ENCODE measurements at regions of chr3 and their contacts with region 1.

Region 1: DNA sequence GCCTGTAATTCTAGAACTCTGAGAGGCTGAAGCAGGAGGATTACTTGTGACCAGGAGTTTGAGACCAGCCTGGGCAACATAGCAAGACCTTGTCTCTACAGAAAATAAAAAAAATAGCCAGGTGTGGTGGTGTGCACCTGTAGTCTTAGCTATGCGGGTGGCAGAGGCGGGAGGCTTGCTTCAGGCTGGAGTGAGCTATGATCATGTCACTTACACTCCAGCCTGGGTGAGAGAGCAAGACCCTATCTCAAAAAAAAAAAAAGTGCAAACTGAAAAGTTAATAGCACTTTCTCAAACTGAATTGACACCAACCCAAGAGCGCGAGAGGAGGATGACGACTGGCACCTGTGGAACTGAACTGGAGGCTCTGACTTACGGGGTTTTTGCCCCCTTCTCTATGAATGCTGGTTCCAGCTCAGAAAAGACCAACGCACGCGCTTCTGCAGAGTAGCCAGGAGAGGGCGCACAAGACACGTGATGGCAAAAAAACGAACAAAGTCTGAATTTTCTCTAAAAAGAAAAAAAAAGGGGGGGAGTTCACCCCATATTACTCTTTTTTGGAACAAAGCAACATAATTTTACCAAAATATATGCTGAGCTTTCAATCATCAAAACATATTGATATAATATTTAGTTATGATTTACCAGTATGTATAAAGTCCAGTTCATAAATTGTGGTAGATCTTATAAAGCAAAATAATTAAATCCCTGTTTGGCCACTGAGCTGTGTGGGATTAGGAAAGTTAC is 23.7 kb downstream of the CFAP92 start:
- DNase-seq: peak in 1 of 2 experiments; percentile 78
- H3K4me3 ChIP-seq: no peak overlapping the region
- H3K27ac ChIP-seq: no peak overlapping the region
- H3K4me1 ChIP-seq: no peaks in the 10 kb centered on the region
- H3K27me3 ChIP-seq: no peaks in the 10 kb centered on the region; a peak in 1 of 7 replicates
- CTCF ChIP-seq: peak; percentile 75 to 84 (median 81)
- EP300 ChIP-seq: no peak
- POLR2A ChIP-seq: no peak
- RAD21 ChIP-seq: peak; percentile 92 to 95

Region 2: GRCh38 chr3:128655531-128655930 is 314.6 kb before region 1 on chr3:
- CTCF ChIA-PET with region 1: no interaction called
- POLR2A ChIA-PET with region 1: no interaction called
- DNase-seq: no peak
- H3K4me3 ChIP-seq: no peak overlapping the region
- H3K27ac ChIP-seq: no peak overlapping the region
- H3K4me1 ChIP-seq: no peaks in the 10 kb centered on the region
- H3K27me3 ChIP-seq: no peaks in the 10 kb centered on the region
- CTCF ChIP-seq: no peak
- EP300 ChIP-seq: no peak
- POLR2A ChIP-seq: no peak
- RAD21 ChIP-seq: no peak

Region 3: GRCh38 chr3:128845778-128846485 is 124.2 kb before region 1 on chr3:
- CTCF ChIA-PET with region 1: no interaction called
- POLR2A ChIA-PET with region 1: no interaction called
- DNase-seq: peak; percentile 60 to 97
- H3K4me3 ChIP-seq: peak overlapping the region in 3 of 4 experiments; percentile 22 to 49 (median 36); a peak in 5 of 8 replicates
- H3K27ac ChIP-seq: no peak overlapping the region
- H3K4me1 ChIP-seq: peaks cover 0 to 11% (median 9%) of the 10 kb centered on the region in 4 experiments; a peak in 4 of 7 replicates
- H3K27me3 ChIP-seq: no peaks in the 10 kb centered on the region
- CTCF ChIP-seq: peak in 2 of 3 experiments; percentile 85 to 88; a peak in 3 of 4 replicates
- EP300 ChIP-seq: 0 out of 3 replicates have a peak, but pooled peaks of 1 of the 2 experiments have one; percentile 34
- POLR2A ChIP-seq: no peak
- RAD21 ChIP-seq: peak; percentile 49 to 59

Region 4: GRCh38 chr3:128950223-128950938 is 19.8 kb before region 1 on chr3:
- CTCF ChIA-PET with region 1: interaction called, 11 read pairs
- POLR2A ChIA-PET with region 1: no interaction called
- DNase-seq: peak in 1 of 2 experiments; percentile 27
- H3K4me3 ChIP-seq: no peak overlapping the region
- H3K27ac ChIP-seq: no peak overlapping the region
- H3K4me1 ChIP-seq: no peaks in the 10 kb centered on the region
- H3K27me3 ChIP-seq: no peaks in the 10 kb centered on the region
- CTCF ChIP-seq: peak in 2 of 3 experiments; percentile 23 to 28; a peak in 2 of 4 replicates
- EP300 ChIP-seq: no peak
- POLR2A ChIP-seq: no peak
- RAD21 ChIP-seq: peak; percentile 38 to 54

Region 5: DNA sequence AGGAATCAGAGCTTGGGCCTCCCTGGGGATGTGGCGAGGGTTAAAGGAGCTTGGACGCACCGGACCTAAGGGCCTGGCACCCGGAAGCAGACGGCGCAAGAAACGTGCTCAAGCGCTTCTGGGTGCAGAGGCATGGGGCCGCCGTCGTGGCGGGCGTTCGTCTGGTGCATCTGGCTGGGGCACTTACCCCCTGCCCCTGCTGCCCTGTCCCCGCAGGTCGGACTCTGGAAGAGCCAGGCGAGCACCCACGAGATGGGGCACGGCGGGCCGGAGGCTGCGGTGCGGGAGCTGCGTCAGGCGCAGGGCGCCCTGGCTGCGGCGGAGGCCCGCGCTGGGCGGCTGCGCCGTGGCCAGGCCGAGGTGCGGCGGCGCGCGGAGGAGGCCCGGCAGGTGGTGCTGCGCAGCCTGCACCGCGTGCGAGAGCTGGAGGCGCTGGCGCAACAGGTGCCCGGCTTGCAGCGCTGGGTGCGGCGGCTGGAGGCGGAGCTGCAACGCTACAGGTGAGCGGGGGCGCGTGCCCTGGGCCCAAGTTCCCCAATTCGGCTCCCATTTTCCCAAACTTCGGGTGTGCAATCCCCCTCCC is 33.5 kb after region 1 on chr3:
- CTCF ChIA-PET with region 1: interaction called, 40 read pairs
- POLR2A ChIA-PET with region 1: no interaction called
- DNase-seq: no peak
- H3K4me3 ChIP-seq: peak overlapping the region in 3 of 4 experiments; percentile 4 to 50 (median 24); a peak in 6 of 8 replicates
- H3K27ac ChIP-seq: no peak overlapping the region
- H3K4me1 ChIP-seq: peaks cover 4 to 19% (median 13%) of the 10 kb centered on the region in 4 experiments
- H3K27me3 ChIP-seq: peaks cover 52 to 70% (median 58%) of the 10 kb centered on the region in 4 experiments
- CTCF ChIP-seq: peak in 2 of 3 experiments; percentile 25 to 38; a peak in 3 of 4 replicates
- EP300 ChIP-seq: no peak
- POLR2A ChIP-seq: no peak
- RAD21 ChIP-seq: no peak; a peak in 1 of 4 replicates

Region 6: DNA sequence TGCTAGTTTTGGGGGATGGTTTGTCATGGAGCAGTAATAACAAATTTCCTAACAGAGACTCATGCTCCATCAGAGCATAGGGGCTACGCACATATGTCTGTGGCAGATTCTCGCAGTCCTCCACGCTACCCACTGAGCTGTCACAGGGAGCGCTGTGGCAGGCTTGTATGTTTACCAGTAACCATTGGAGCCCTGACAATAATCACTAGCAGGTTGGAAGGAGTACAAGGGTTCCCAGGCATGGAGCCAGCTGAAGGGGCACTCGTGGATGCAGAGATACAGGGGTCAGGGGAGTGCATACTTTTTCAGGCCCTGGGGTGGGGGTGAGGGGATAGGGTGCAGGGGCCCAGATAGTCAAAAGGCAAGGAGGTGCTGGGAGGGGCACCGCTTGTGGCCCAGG is 82.5 kb after region 1 on chr3:
- CTCF ChIA-PET with region 1: interaction called, 79 read pairs
- POLR2A ChIA-PET with region 1: no interaction called
- DNase-seq: no peak
- H3K4me3 ChIP-seq: no peak overlapping the region
- H3K27ac ChIP-seq: no peak overlapping the region
- H3K4me1 ChIP-seq: no peaks in the 10 kb centered on the region
- H3K27me3 ChIP-seq: no peaks in the 10 kb centered on the region
- CTCF ChIP-seq: no peak
- EP300 ChIP-seq: no peak
- POLR2A ChIP-seq: no peak
- RAD21 ChIP-seq: no peak

Region 7: DNA sequence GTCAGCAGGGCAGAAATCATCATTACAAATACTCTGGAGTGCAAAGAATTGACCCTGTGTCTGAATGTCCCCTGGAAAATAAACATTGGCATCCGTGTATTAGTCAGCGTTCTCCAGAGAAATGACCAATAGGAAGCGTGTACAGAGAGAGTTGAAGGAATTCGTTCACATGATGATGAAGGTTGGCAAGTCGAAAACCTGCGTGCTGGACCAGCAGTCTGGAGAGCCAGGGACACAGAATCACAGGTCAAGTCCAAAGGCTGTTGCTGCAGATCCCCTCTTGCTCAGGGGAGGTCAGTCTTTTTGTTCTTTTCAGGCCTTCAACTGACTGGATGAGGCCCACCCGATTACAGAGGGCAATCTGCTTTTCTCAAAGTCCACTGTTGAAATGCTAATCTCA is 107.1 kb after region 1 on chr3:
- CTCF ChIA-PET with region 1: interaction called, 11 read pairs
- POLR2A ChIA-PET with region 1: interaction called, 3 read pairs
- DNase-seq: no peak
- H3K4me3 ChIP-seq: no peak overlapping the region
- H3K27ac ChIP-seq: no peak overlapping the region
- H3K4me1 ChIP-seq: no peaks in the 10 kb centered on the region
- H3K27me3 ChIP-seq: no peaks in the 10 kb centered on the region
- CTCF ChIP-seq: no peak
- EP300 ChIP-seq: no peak
- POLR2A ChIP-seq: no peak
- RAD21 ChIP-seq: no peak

Region 8: DNA sequence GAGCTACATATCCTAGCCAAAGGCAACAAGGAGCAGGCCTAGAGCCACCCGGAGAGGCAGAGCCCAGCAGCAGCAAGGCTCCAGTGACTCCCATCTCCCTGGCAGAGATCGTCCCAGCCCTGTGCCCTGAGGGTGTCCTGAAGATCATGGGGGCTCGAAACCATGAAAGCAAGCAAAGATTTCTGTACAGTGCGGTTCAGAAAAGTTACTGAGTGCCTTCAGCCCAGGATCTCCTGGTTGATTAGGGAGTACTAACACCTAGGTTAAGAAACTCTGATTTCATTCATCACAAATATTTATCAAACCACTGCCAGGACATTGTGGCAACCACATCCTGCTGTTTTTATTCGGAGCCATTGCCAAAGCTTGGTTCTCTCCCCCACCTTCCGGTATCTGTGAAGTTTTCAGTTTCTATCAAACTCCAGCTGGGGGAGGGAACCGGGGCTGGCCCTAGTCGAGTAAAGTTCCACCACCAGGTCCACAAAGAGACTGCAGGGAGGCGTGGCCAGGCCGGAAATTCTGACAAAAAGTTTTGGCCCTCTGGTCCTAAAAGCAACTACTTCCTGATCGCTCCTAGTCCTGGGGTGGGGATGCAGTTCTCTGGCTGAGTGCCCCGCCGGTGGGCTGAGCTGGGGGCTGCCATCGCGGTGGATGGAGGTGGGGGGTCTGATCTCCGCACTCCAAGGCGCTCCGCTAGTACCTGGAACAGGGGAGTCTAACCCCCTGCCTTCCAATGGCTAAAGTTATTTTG is 150.3 kb after region 1 on chr3:
- CTCF ChIA-PET with region 1: interaction called, 13 read pairs
- POLR2A ChIA-PET with region 1: no interaction called
- DNase-seq: peak; percentile 62 to 83
- H3K4me3 ChIP-seq: peak overlapping the region; percentile 68 to 82 (median 74)
- H3K27ac ChIP-seq: peak overlapping the region; percentile 86
- H3K4me1 ChIP-seq: peaks cover 12 to 21% (median 16%) of the 10 kb centered on the region in 4 experiments
- H3K27me3 ChIP-seq: no peaks in the 10 kb centered on the region
- CTCF ChIP-seq: peak in 2 of 3 experiments; percentile 7 to 23; a peak in 2 of 4 replicates
- EP300 ChIP-seq: no peak
- POLR2A ChIP-seq: peak; percentile 63 to 77
- RAD21 ChIP-seq: no peak; a peak in 1 of 4 replicates

Region 9: GRCh38 chr3:129211772-129212171 is 241.6 kb after region 1 on chr3:
- CTCF ChIA-PET with region 1: no interaction called
- POLR2A ChIA-PET with region 1: no interaction called
- DNase-seq: no peak
- H3K4me3 ChIP-seq: no peak overlapping the region
- H3K27ac ChIP-seq: no peak overlapping the region
- H3K4me1 ChIP-seq: no peaks in the 10 kb centered on the region
- H3K27me3 ChIP-seq: no peaks in the 10 kb centered on the region
- CTCF ChIP-seq: no peak
- EP300 ChIP-seq: no peak
- POLR2A ChIP-seq: no peak
- RAD21 ChIP-seq: no peak

Region 10: DNA sequence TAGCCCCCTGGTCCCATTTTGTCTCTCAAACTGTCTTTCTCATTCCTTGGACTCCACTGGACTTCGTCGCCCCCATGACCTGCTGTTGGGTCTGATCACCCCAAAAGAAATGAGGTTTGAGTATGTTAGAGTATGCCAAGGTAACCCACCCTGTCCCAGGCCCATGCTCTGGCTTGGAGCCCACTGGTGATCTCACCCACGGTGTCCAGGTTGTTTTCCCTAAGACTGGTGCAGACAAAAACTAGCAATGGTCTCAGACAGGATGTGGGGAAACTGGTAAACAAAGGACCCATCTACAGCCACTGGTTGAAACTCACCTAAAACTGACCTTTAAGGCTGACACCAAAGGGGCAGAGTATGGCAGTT is 419.4 kb after region 1 on chr3:
- CTCF ChIA-PET with region 1: no interaction called
- POLR2A ChIA-PET with region 1: no interaction called
- DNase-seq: no peak
- H3K4me3 ChIP-seq: no peak overlapping the region
- H3K27ac ChIP-seq: no peak overlapping the region
- H3K4me1 ChIP-seq: no peaks in the 10 kb centered on the region; a peak in 1 of 7 replicates
- H3K27me3 ChIP-seq: no peaks in the 10 kb centered on the region
- CTCF ChIP-seq: no peak
- EP300 ChIP-seq: no peak
- POLR2A ChIP-seq: no peak
- RAD21 ChIP-seq: no peak

Measured in H1 (cell line).